Sigmoid colon (tissue), 7 donors: ENCODE measurements at regions of chr11 and their contacts with region 1.

Region 1: GRCh38 chr11:25247336-25247735 is 750.5 kb downstream of the LUZP2 start:
- DNase-seq: no peak
- H3K4me3 ChIP-seq: no peak overlapping the region
- H3K27ac ChIP-seq: no peak overlapping the region
- H3K4me1 ChIP-seq: no peaks in the 10 kb centered on the region
- H3K27me3 ChIP-seq: no peaks in the 10 kb centered on the region
- CTCF ChIP-seq: no peak
- EP300 ChIP-seq: no peak
- POLR2A ChIP-seq: no peak

Region 2: GRCh38 chr11:25183411-25183810 is 63.9 kb before region 1 on chr11:
- intact Hi-C with region 1: loop called (anchors 10 kb)
- DNase-seq: no peak
- H3K4me3 ChIP-seq: no peak overlapping the region
- H3K27ac ChIP-seq: no peak overlapping the region
- H3K4me1 ChIP-seq: no peaks in the 10 kb centered on the region
- H3K27me3 ChIP-seq: no peaks in the 10 kb centered on the region
- CTCF ChIP-seq: no peak
- EP300 ChIP-seq: no peak
- POLR2A ChIP-seq: no peak